HCT116 (cell line): ENCODE measurements at regions of chr6 and their contacts with region 1.

Region 1: DNA sequence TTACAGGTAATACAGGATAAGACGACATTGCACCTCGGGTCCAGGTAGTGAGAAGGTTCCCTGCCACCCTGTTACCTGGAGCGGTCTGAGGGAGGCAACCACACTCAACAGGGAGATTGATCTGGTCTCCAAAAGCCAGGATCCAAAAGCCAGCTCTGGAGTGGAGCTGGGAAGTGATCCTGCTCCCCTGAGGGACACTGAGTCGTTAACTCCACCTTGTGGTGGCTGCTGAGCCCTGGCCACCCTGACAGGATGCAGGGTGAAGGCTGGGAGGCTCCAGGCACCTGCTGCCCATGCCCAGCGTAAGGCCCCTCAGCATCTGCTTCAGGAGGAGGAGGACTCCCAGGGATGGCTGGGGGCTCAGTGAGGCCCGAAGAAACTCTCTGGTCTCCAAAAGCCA is 38.7 kb upstream of the SLC22A2 start:
- DNase-seq: no peak
- ATAC-seq: peak; percentile 79
- H3K4me3 ChIP-seq: no peak overlapping the region
- H3K27ac ChIP-seq: no peak overlapping the region
- H3K4me1 ChIP-seq: peaks cover 0 to 8% of the 10 kb centered on the region in 2 experiments; a peak in 2 of 4 replicates
- H3K27me3 ChIP-seq: no peaks in the 10 kb centered on the region
- CTCF ChIP-seq: peak; percentile 24 to 27 (median 26); a peak in 2 of 6 replicates
- POLR2A ChIP-seq: no peak
- RAD21 ChIP-seq: peak; percentile 55

Region 2: DNA sequence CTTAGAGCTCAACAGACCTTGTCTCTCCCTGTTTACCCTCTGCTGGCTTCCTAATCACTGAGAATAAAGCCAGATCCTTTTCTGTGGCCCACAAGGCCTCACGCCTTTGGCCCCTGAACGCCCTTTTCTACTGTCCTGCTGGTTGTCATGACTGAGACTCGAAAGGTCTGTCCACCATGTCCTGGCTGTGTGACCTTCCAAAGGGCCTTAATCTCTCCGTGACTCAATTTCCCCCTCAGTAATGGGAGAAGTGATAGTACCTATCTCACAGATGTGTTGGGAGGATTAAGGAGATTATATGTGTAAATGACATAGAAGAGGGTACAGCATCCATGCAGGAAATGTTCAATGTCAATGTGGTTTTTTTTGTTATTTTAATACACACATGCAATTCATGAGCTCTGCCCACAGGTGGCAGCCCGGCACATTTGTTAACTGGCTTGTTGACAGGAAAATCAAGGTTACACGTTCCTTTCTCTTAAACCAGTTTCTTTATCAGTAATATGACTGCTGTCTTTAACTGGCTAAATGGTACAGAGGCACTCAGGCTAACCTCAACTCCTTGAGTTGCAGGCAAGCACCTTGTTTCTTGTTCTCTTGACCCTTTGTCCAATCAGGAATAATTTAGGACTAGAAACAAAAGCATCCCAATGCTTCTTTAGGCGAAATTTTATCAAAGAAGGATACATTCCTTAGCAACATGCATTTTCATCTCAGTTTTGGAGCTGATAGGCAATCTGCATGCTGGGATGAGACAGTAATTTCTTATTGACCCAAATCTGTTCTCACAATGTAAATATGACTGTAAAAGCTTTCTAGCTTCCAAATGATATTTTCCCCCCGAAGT is 159.1 kb before region 1 on chr6:
- CTCF ChIA-PET with region 1: interaction called, 5 read pairs
- POLR2A ChIA-PET with region 1: no interaction called
- RAD21 ChIA-PET with region 1: no interaction called
- intact Hi-C with region 1: loop called (anchors 10 kb)
- DNase-seq: peak; percentile 32
- ATAC-seq: peak; percentile 61
- H3K4me3 ChIP-seq: no peak overlapping the region
- H3K27ac ChIP-seq: no peak overlapping the region
- H3K4me1 ChIP-seq: peaks cover 0 to 11% of the 10 kb centered on the region in 2 experiments; a peak in 1 of 4 replicates
- H3K27me3 ChIP-seq: no peaks in the 10 kb centered on the region
- CTCF ChIP-seq: peak in 2 of 3 experiments; percentile 70 to 71; a peak in 5 of 6 replicates
- POLR2A ChIP-seq: no peak
- RAD21 ChIP-seq: peak; percentile 82

Region 3: DNA sequence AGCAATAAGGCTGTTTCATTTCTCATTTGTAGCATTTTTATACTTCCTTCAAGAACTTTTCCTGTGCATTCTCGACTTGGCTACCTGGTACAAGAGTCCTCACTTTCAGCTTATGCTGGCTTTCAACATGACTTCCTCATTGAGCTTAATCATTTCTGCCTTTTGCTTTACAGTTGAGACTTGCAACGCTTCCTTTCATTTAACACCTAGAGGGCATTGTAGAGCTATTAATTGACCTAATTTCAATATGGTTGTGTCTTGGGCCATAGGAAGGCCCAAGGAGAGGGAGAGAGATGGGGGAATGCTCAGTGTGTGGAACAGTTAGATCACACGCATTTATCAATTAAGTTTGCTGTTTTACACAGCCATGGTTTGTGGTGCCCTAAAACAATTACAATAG is 75.9 kb before region 1 on chr6:
- CTCF ChIA-PET with region 1: interaction called, 10 read pairs
- POLR2A ChIA-PET with region 1: no interaction called
- RAD21 ChIA-PET with region 1: no interaction called
- intact Hi-C with region 1: no loop called
- DNase-seq: no peak
- ATAC-seq: peak; percentile 82
- H3K4me3 ChIP-seq: no peak overlapping the region
- H3K27ac ChIP-seq: no peak overlapping the region
- H3K4me1 ChIP-seq: no peaks in the 10 kb centered on the region
- H3K27me3 ChIP-seq: no peaks in the 10 kb centered on the region
- CTCF ChIP-seq: peak; percentile 4 to 37 (median 35); a peak in 3 of 6 replicates
- POLR2A ChIP-seq: no peak
- RAD21 ChIP-seq: peak; percentile 66

Region 4: GRCh38 chr6:160853946-160854345 is 556.6 kb after region 1 on chr6:
- CTCF ChIA-PET with region 1: no interaction called
- POLR2A ChIA-PET with region 1: no interaction called
- RAD21 ChIA-PET with region 1: no interaction called
- intact Hi-C with region 1: no loop called
- DNase-seq: no peak
- ATAC-seq: no peak
- H3K4me3 ChIP-seq: no peak overlapping the region
- H3K27ac ChIP-seq: no peak overlapping the region
- H3K4me1 ChIP-seq: no peaks in the 10 kb centered on the region
- H3K27me3 ChIP-seq: no peaks in the 10 kb centered on the region
- CTCF ChIP-seq: no peak
- POLR2A ChIP-seq: no peak
- RAD21 ChIP-seq: no peak